CD8-positive, alpha-beta memory T cell (primary cell): ENCODE measurements at regions of chr20 and their contacts with region 1.

Region 1: DNA sequence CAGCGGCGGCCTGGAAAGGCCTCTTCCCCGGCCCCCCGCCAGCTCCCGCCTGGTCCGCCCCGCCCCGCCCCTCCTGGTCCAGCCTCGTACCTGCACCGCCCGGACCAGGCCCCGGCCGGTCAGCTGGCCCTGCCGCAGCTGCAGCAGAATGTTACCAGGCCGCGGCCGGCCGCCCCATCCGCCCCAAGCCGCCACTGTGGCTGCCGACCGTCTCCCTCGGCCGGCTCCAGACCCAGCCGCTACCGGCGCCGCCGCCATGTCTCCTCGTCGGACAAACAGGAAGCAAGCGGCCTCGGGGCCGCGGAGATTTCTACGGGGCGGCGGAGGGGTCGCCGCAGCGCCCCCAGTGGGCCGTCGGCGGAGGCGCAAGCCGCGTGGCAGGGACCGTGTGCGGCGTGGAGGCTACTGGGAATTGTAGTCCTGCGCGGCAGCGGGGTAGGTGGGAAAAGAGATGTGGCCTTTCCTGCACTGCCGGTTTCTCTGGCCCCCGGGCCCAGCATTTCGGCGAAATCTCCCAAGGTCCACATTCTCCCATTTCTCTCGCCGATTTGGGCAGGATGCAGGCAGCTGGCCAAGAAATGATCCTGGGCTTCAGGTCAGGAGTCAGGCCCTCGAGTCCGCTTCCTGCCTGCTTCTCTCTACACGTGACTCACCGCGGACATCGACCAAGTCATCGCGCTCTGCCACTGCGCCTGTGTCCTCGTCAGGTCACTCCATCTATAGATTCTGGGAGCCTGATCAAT is at the start of gene TRPC4AP:
- DNase-seq: peak; percentile 81 to 90 (median 85)
- H3K4me3 ChIP-seq: peak within 1 kb of the TSS; percentile 91
- H3K4me3 Mint-ChIP-seq: peak within 1 kb of the TSS; percentile 87 to 94 (median 91)
- H3K27ac ChIP-seq: peak within 1 kb of the TSS; percentile 78
- H3K27ac Mint-ChIP-seq: peak within 1 kb of the TSS; percentile 79 to 97 (median 95)
- H3K4me1 ChIP-seq: peaks cover 23% of the 10 kb centered on the region
- H3K4me1 Mint-ChIP-seq: peaks cover 44 to 62% (median 54%) of the 10 kb centered on the region in 3 donors
- H3K27me3 ChIP-seq: no peaks in the 10 kb centered on the region
- H3K27me3 Mint-ChIP-seq: peaks cover 0 to 1% of the 10 kb centered on the region in 2 donors
- total RNA-seq, gene TRPC4AP: 51.2 to 53.4 TPM

Region 2: DNA sequence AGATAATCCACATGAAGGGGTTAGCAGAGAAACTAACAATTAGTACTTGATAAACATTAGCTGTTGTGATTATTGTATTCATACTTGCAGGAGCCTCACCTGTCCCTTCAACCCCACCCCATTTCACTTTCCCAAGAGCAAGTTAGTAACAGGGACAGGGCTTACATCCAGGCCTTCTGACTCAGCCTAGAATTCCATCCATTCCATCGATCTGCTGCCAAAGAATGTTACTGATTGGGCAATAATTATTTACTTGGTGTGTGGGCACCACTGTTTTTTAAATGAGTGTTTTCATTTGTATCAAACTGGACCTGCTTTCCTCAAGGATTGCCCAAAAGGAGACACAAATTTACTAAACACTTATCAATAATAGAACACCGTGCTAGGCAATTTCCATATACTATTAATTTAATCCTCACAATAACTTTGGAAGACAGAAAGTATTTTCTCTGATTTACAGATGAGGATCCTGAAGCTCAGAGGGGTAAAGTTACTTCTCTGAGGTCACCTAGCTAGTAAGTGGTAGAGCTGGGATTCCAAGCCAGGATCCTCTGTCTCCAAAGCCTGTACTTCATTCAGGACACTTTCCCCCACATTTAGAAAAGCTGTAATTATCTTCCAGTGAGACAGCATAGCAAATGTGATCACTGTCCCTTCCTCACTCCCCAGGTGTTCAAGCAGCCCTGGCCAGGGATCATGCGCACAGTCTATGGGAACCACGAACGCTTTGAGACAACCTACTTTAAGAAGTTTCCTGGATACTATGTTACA is 169.9 kb before region 1 on chr20:
- CTCF ChIA-PET with region 1: no interaction called
- POLR2A ChIA-PET with region 1: no interaction called
- DNase-seq: no peak
- H3K4me3 ChIP-seq: no peak overlapping the region
- H3K4me3 Mint-ChIP-seq: no peak overlapping the region
- H3K27ac ChIP-seq: no peak overlapping the region
- H3K27ac Mint-ChIP-seq: no peak overlapping the region
- H3K4me1 ChIP-seq: peaks cover 11% of the 10 kb centered on the region
- H3K4me1 Mint-ChIP-seq: peaks cover 10 to 33% (median 14%) of the 10 kb centered on the region in 3 donors
- H3K27me3 ChIP-seq: no peaks in the 10 kb centered on the region
- H3K27me3 Mint-ChIP-seq: peaks cover 0 to 1% of the 10 kb centered on the region in 2 donors

Region 3: GRCh38 chr20:35039146-35039545 is 53.5 kb before region 1 on chr20:
- CTCF ChIA-PET with region 1: no interaction called
- POLR2A ChIA-PET with region 1: no interaction called
- DNase-seq: no peak
- H3K4me3 ChIP-seq: no peak overlapping the region
- H3K4me3 Mint-ChIP-seq: no peak overlapping the region
- H3K27ac ChIP-seq: no peak overlapping the region
- H3K27ac Mint-ChIP-seq: peak overlapping the region in 4 of 8 donors; percentile 16 to 57 (median 28)
- H3K4me1 ChIP-seq: no peaks in the 10 kb centered on the region
- H3K4me1 Mint-ChIP-seq: peaks cover 0 to 12% (median 0%) of the 10 kb centered on the region in 3 donors
- H3K27me3 ChIP-seq: no peaks in the 10 kb centered on the region
- H3K27me3 Mint-ChIP-seq: peaks cover 0 to 2% of the 10 kb centered on the region in 2 donors

Region 4: GRCh38 chr20:35207950-35208611 is 115.4 kb after region 1 on chr20:
- CTCF ChIA-PET with region 1: interaction called, 28 read pairs
- POLR2A ChIA-PET with region 1: no interaction called
- DNase-seq: peak; percentile 62 to 83 (median 69)
- H3K4me3 ChIP-seq: no peak overlapping the region
- H3K4me3 Mint-ChIP-seq: no peak overlapping the region
- H3K27ac ChIP-seq: no peak overlapping the region
- H3K27ac Mint-ChIP-seq: no peak overlapping the region
- H3K4me1 ChIP-seq: no peaks in the 10 kb centered on the region
- H3K4me1 Mint-ChIP-seq: no peaks in the 10 kb centered on the region
- H3K27me3 ChIP-seq: no peaks in the 10 kb centered on the region
- H3K27me3 Mint-ChIP-seq: no peaks in the 10 kb centered on the region

Region 5: DNA sequence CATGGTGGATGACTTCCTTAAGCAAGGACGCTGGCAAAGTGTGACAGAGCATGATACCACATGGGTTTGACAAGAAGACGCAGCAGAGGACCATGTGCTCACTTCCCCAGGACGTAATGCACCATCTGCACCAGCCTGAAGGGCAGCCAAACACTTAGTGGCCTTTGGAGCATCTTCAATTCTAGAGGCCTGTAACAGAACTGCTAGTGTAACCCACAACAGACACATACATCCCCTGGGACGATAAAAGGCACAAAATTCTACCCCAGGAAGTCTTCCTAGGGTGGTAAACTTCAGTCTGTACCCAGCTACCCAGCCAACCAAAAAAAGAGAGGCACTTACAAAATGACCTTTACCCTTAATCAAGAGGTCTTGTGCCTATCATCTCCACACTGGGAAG is 581.2 kb after region 1 on chr20:
- CTCF ChIA-PET with region 1: no interaction called
- POLR2A ChIA-PET with region 1: no interaction called
- DNase-seq: no peak
- H3K4me3 ChIP-seq: no peak overlapping the region
- H3K4me3 Mint-ChIP-seq: no peak overlapping the region
- H3K27ac ChIP-seq: no peak overlapping the region
- H3K27ac Mint-ChIP-seq: peak overlapping the region in 1 of 8 donors; percentile 38
- H3K4me1 ChIP-seq: no peaks in the 10 kb centered on the region
- H3K4me1 Mint-ChIP-seq: no peaks in the 10 kb centered on the region
- H3K27me3 ChIP-seq: no peaks in the 10 kb centered on the region
- H3K27me3 Mint-ChIP-seq: peaks cover 0 to 1% of the 10 kb centered on the region in 2 donors